Ascending aorta (tissue), 2 donors: ENCODE measurements at regions of chr17 and their contacts with region 1.

Region 1: GRCh38 chr17:44581868-44582267 is 24.6 kb downstream of the FZD2 start:
- DNase-seq: no peak
- H3K4me3 ChIP-seq: no peak overlapping the region
- H3K27ac ChIP-seq: no peak overlapping the region
- H3K4me1 ChIP-seq: peaks cover 4 to 13% of the 10 kb centered on the region in 2 donors
- H3K27me3 ChIP-seq: no peaks in the 10 kb centered on the region
- CTCF ChIP-seq: peak in 2 of 3 experiments; percentile 12 to 34

Region 2: GRCh38 chr17:44599298-44600175 is 17.7 kb after region 1 on chr17:
- intact Hi-C with region 1: loop called (anchors 1 kb)
- DNase-seq: peak; percentile 74 to 93
- H3K4me3 ChIP-seq: no peak overlapping the region
- H3K27ac ChIP-seq: peak overlapping the region; percentile 65 to 88
- H3K4me1 ChIP-seq: peaks cover 7 to 11% of the 10 kb centered on the region in 2 donors
- H3K27me3 ChIP-seq: no peaks in the 10 kb centered on the region
- CTCF ChIP-seq: no peak

Region 3: GRCh38 chr17:44630703-44631102 is 48.8 kb after region 1 on chr17:
- intact Hi-C with region 1: loop called (anchors 5 kb)
- DNase-seq: no peak
- H3K4me3 ChIP-seq: no peak overlapping the region
- H3K27ac ChIP-seq: no peak overlapping the region
- H3K4me1 ChIP-seq: no peaks in the 10 kb centered on the region
- H3K27me3 ChIP-seq: no peaks in the 10 kb centered on the region
- CTCF ChIP-seq: no peak